Endothelial cell of umbilical vein (primary cell): ENCODE measurements at regions of chr5 and their contacts with region 1.

Region 1: GRCh38 chr5:15645381-15646160 is 145.6 kb downstream of the FBXL7 start:
- DNase-seq: peak; percentile 74
- H3K4me3 ChIP-seq: no peak overlapping the region
- H3K27ac ChIP-seq: no peak overlapping the region
- H3K4me1 ChIP-seq: peaks cover 21% of the 10 kb centered on the region
- H3K27me3 ChIP-seq: no peaks in the 10 kb centered on the region
- CTCF ChIP-seq: no peak
- POLR2A ChIP-seq: no peak

Region 2: GRCh38 chr5:15499528-15500324 is 145.8 kb before region 1 on chr5 and contains the start of gene FBXL7:
- CTCF ChIA-PET with region 1: no interaction called
- POLR2A ChIA-PET with region 1: no interaction called
- dilution Hi-C with region 1: no loop called
- intact Hi-C with region 1: no loop called
- DNase-seq: peak; percentile 81
- H3K4me3 ChIP-seq: peak within 1 kb of the TSS; percentile 83 to 98 (median 88)
- H3K27ac ChIP-seq: peak within 1 kb of the TSS; percentile 66
- H3K4me1 ChIP-seq: peaks cover 34% of the 10 kb centered on the region
- H3K27me3 ChIP-seq: no peaks in the 10 kb centered on the region
- CTCF ChIP-seq: peak in 1 of 2 donors; percentile 24
- POLR2A ChIP-seq: peak; percentile 88
- total RNA-seq, gene FBXL7: 28.6 and 32.2 TPM in 2 replicates

Region 3: DNA sequence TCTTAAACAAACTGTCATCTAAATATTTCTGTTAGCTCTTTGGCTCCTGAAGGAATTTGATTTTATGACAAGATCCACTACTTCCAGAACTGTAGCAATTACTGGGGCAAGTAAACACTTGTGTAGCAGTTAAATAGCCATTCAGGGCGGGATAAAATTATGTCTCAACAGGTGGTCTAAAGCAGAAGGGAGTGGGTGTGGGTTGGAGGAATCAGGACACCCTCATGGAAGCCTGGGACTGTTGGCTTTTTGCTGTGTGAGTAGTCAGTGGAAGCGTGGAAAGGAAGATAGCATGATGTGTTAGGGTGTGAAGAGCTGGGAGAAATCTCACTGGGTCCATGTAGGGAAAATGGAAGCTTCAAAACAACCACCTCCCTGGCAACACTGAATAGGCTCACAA is 18.5 kb before region 1 on chr5:
- CTCF ChIA-PET with region 1: interaction called, 4 read pairs
- POLR2A ChIA-PET with region 1: no interaction called
- dilution Hi-C with region 1: no loop called
- intact Hi-C with region 1: loop called (anchors 2 kb)
- DNase-seq: no peak
- H3K4me3 ChIP-seq: no peak overlapping the region
- H3K27ac ChIP-seq: no peak overlapping the region
- H3K4me1 ChIP-seq: peaks cover 8% of the 10 kb centered on the region
- H3K27me3 ChIP-seq: no peaks in the 10 kb centered on the region
- CTCF ChIP-seq: no peak
- POLR2A ChIP-seq: no peak

Region 4: DNA sequence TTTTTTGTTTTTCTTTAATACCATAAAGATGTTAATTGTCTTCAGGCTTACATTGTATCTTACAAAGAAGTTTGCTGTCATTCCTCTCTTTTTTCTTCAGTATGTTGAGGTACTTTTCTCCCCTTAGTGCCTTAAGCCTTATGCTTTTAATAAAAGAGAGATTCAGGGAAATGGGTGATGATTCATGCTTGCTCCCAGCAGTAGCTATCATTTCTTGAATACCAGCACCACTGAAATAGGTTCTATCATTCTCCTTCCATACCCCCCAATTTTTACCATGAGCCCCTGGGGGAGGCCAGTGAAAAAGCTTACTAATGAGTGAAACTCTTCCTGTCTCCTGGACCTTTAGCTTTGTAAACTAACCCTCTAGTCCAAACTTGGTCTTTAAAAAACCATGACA is 19.4 kb after region 1 on chr5:
- CTCF ChIA-PET with region 1: no interaction called
- POLR2A ChIA-PET with region 1: no interaction called
- dilution Hi-C with region 1: no loop called
- intact Hi-C with region 1: no loop called
- DNase-seq: no peak
- H3K4me3 ChIP-seq: no peak overlapping the region
- H3K27ac ChIP-seq: no peak overlapping the region
- H3K4me1 ChIP-seq: peaks cover 3% of the 10 kb centered on the region
- H3K27me3 ChIP-seq: no peaks in the 10 kb centered on the region
- CTCF ChIP-seq: no peak
- POLR2A ChIP-seq: no peak